Activated CD4-positive, alpha-beta T cell treated with anti-CD3 and anti-CD28 coated beads, Interleukin-2, amount 10 ng/mL, durations not matched to agents 24 days and 14 days (primary cell): ENCODE measurements at regions of chr15 and their contacts with region 1.

Region 1: GRCh38 chr15:41116116-41116871 is at the start of gene INO80:
- DNase-seq: peak; percentile 99
- H3K4me3 Mint-ChIP-seq: peak within 1 kb of the TSS; percentile 91
- H3K27ac Mint-ChIP-seq: peak within 1 kb of the TSS; percentile 99
- H3K4me1 Mint-ChIP-seq: peaks cover 17% of the 10 kb centered on the region
- H3K27me3 Mint-ChIP-seq: peaks cover 2% of the 10 kb centered on the region
- total RNA-seq, gene INO80: 33.1 and 37.2 TPM in 2 replicates

Region 2: DNA sequence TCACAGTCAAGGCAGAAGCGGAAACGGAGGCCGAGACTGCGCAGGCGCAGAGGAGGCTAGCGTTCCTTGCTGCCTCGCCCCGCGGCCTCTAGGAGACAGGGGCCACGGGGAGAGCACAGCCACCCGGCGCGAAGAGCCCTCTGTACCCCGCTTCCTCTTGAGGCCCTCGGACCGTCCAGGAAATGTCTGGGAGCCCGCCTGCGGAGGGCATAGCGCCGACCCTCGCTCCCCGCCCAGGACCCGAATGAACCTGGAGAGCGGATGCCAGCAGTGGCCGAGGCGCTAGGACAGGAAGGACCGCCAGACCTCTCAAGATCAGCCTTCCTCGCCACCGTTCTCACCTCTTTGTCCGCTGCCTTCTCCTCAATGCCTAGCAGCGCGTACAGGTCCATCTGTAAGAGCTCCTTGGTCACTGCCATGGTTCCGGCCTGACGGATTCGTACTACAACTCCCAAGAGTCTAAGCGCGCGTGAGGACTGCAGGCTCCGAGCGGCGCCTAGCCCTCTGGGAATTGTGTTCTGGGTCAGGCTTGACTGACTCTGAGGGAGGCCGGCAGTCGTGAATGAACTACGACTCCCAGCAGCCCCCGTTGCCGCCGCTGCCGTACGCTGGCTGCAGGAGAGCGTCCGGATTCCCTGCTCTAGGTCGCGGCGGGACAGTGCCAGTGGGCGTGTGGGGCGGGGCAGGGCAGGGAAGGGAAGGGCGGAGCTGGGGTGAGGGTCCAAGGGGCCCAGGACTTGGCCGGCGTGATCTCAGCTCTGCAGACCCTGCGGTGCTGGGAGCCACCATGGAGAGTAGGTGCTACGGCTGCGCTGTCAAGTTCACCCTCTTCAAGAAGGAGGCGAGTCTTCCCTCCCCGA is 309.0 kb before region 1 on chr15 and contains the starts of genes DNAJC17 and ZFYVE19:
- intact Hi-C with region 1: loop called (anchors 1 kb)
- DNase-seq: peak; percentile 98
- H3K4me3 Mint-ChIP-seq: peak within 1 kb of the TSS; percentile 93
- H3K27ac Mint-ChIP-seq: peak within 1 kb of the TSS; percentile 96
- H3K4me1 Mint-ChIP-seq: peaks cover 13% of the 10 kb centered on the region
- H3K27me3 Mint-ChIP-seq: no peaks in the 10 kb centered on the region
- total RNA-seq, gene DNAJC17: 53.8 and 54.3 TPM in 2 replicates
- total RNA-seq, gene ZFYVE19: 35.6 and 37.6 TPM in 2 replicates

Region 3: GRCh38 chr15:40941528-40942336 is 174.6 kb before region 1 on chr15:
- intact Hi-C with region 1: loop called (anchors 5 kb)
- DNase-seq: peak; percentile 92
- H3K4me3 Mint-ChIP-seq: peak overlapping the region; percentile 88
- H3K27ac Mint-ChIP-seq: peak overlapping the region; percentile 87
- H3K4me1 Mint-ChIP-seq: peaks cover 40% of the 10 kb centered on the region
- H3K27me3 Mint-ChIP-seq: no peaks in the 10 kb centered on the region

Region 4: GRCh38 chr15:41230650-41231533 is 114.6 kb after region 1 on chr15 and contains the starts of genes CHP1 and EXD1:
- intact Hi-C with region 1: loop called (anchors 1 kb)
- DNase-seq: peak; percentile 99
- H3K4me3 Mint-ChIP-seq: peak within 1 kb of the TSS; percentile 94
- H3K27ac Mint-ChIP-seq: peak within 1 kb of the TSS; percentile 93
- H3K4me1 Mint-ChIP-seq: peaks cover 19% of the 10 kb centered on the region
- H3K27me3 Mint-ChIP-seq: peaks cover 2% of the 10 kb centered on the region
- total RNA-seq, gene CHP1: 47.4 and 47.8 TPM in 2 replicates
- total RNA-seq, gene EXD1: not detected in 2 replicates

Region 5: DNA sequence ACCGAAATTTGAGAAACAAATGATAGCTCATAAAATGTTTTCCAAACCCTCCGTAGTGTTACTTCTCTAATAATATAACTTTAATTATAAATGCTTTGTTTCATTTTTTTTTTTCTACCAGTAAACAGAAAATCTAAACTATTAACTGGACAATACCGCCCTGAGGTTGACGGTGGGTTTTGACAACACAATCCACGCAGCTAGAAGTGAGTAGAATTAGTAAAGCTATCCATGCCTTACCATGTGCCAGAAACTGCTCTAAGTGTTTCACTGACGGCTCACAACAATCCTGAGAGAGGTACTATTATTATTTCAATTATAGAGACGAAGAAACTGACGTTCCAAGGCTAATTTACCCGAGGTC is 285.6 kb after region 1 on chr15:
- intact Hi-C with region 1: loop called (anchors 5 kb)
- DNase-seq: no peak
- H3K4me3 Mint-ChIP-seq: peak overlapping the region; percentile 93
- H3K27ac Mint-ChIP-seq: peak overlapping the region; percentile 94
- H3K4me1 Mint-ChIP-seq: peaks cover 12% of the 10 kb centered on the region
- H3K27me3 Mint-ChIP-seq: no peaks in the 10 kb centered on the region